Naive thymus-derived CD4-positive, alpha-beta T cell (primary cell): ENCODE measurements at regions of chr3 and their contacts with region 1.

Region 1: DNA sequence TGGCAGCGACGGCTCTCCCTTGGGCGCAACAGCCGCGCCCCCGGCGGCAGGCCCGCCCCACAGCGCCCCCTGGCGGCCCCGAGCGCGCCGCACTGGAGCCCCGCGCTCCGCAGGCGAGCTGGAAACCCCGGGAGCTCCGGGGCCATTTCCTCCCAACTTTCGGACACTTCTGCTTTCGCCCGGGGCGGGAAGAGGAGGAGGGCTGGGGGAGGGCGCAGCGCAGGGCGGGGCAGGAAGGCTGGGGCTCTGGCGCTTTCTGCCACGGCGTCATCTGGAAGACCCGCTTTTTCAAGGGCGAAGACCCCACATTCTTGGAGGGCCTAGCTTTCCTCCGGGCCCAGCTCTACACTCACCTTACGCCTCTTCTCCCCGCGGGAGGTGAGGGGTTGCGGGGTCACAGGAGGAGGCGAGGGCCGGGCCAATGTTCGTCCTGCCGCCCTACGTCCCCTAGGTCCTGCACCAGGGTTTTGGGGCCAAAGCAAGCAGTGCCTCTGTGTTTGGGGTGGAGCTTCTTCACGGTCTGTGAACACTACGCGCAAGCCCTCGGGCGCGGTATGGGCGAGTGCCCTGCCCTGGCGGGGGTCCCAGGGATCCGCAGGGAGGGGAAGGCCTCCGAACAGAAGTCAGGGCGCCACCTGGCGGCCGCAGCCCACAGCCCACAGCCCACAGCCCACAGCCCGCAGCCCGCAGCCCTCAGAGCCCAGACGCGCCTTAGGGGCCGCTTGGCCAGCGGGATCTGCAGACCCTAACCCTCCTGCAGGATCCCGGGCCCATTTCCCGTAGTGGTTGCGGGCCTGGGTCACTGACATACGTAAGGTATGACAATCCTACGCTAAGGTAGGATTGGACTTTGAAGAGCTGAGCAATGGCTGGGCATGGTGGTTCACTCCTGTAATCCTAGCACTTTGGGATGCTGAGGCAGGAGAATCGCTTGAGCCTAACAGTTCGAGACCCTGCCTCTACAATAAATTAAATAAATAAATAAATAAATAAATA is 31.1 kb downstream of the FOXL2 start:
- DNase-seq: peak; percentile 66 to 91 (median 80)
- ATAC-seq: peak; percentile 90
- H3K4me3 ChIP-seq: peak overlapping the region; percentile 88
- H3K4me3 Mint-ChIP-seq: peak overlapping the region; percentile 54 to 88 (median 86)
- H3K27ac ChIP-seq: peak overlapping the region; percentile 62
- H3K27ac Mint-ChIP-seq: peak overlapping the region in 6 of 9 donors; percentile 21 to 77 (median 62)
- H3K4me1 ChIP-seq: no peaks in the 10 kb centered on the region
- H3K4me1 Mint-ChIP-seq: peaks cover 5 to 9% (median 6%) of the 10 kb centered on the region in 7 donors
- H3K27me3 ChIP-seq: no peaks in the 10 kb centered on the region
- H3K27me3 Mint-ChIP-seq: peaks cover 0 to 37% (median 0%) of the 10 kb centered on the region in 5 donors

Region 2: DNA sequence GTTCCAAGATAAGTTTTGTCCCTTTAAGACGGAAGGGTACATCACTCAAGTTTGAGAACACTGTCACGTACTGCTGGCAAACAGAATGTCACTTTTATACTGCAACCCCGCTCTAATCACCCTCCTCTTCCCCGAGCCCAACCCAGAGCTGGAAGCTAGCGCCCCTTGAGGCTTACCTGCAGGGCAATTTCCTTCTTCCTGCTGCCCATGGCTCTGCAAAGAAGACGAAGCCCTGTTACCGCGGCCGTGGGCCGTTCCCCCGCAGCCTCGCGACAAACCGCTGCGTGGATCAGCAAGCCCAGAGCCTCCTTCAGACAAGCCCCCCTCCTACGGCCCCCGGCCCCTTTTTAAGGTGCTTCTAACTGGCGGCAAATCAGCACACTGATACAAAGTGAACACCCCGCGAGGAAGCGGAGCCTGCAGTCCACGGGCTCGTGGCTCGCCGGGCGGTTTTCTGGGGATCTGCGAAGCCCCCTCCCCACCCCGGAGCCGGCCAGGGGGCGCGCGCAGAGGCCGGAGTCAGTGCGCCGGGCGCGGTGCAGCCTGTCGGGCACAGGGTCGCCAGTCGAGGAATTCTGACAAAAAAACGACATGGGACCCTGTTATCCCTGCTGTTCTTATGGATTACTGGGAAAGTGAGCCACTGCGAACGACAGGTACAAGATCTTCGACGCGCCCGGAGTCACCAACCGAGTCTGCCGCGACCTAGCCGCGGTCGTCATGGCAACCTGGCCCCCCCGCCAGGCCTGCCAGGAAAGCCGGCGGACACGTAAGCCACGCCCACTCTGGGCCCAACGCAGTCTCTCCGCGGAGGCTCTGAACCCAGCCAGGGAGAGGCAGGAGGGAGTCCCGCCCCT is 586.4 kb before region 1 on chr3 and contains the start of gene NME9:
- CTCF ChIA-PET with region 1: no interaction called
- POLR2A ChIA-PET with region 1: no interaction called
- intact Hi-C with region 1: loop called (anchors 2 to 5 kb)
- DNase-seq: peak; percentile 79 to 91 (median 86)
- ATAC-seq: peak; percentile 95
- H3K4me3 ChIP-seq: peak within 1 kb of the TSS; percentile 78
- H3K4me3 Mint-ChIP-seq: peak within 1 kb of the TSS; percentile 91 to 99 (median 97)
- H3K27ac ChIP-seq: peak within 1 kb of the TSS; percentile 86
- H3K27ac Mint-ChIP-seq: peak within 1 kb of the TSS; percentile 85 to 98 (median 94)
- H3K4me1 ChIP-seq: peaks cover 5 to 8% of the 10 kb centered on the region in 2 donors
- H3K4me1 Mint-ChIP-seq: peaks cover 12 to 40% (median 36%) of the 10 kb centered on the region in 7 donors
- H3K27me3 ChIP-seq: no peaks in the 10 kb centered on the region
- H3K27me3 Mint-ChIP-seq: peaks cover 0 to 10% (median 0%) of the 10 kb centered on the region in 5 donors
- total RNA-seq, gene NME9: 0.69 to 2.0 (median 1.2) TPM in 4 of 5 experiments, not detected in the other

Region 3: GRCh38 chr3:138673641-138674530 is 241.9 kb before region 1 on chr3:
- CTCF ChIA-PET with region 1: no interaction called
- POLR2A ChIA-PET with region 1: no interaction called
- intact Hi-C with region 1: no loop called
- DNase-seq: no peak
- ATAC-seq: no peak
- H3K4me3 ChIP-seq: no peak overlapping the region
- H3K4me3 Mint-ChIP-seq: no peak overlapping the region
- H3K27ac ChIP-seq: no peak overlapping the region
- H3K27ac Mint-ChIP-seq: no peak overlapping the region
- H3K4me1 ChIP-seq: no peaks in the 10 kb centered on the region
- H3K4me1 Mint-ChIP-seq: peaks cover 0 to 3% (median 0%) of the 10 kb centered on the region in 7 donors
- H3K27me3 ChIP-seq: no peaks in the 10 kb centered on the region
- H3K27me3 Mint-ChIP-seq: no peaks in the 10 kb centered on the region

Region 4: GRCh38 chr3:138686771-138687221 is 229.0 kb before region 1 on chr3:
- CTCF ChIA-PET with region 1: interaction called, 28 read pairs
- POLR2A ChIA-PET with region 1: no interaction called
- intact Hi-C with region 1: no loop called
- DNase-seq: no peak
- ATAC-seq: peak; percentile 63
- H3K4me3 ChIP-seq: no peak overlapping the region
- H3K4me3 Mint-ChIP-seq: no peak overlapping the region
- H3K27ac ChIP-seq: no peak overlapping the region
- H3K27ac Mint-ChIP-seq: no peak overlapping the region
- H3K4me1 ChIP-seq: no peaks in the 10 kb centered on the region
- H3K4me1 Mint-ChIP-seq: peaks cover 0 to 7% (median 0%) of the 10 kb centered on the region in 7 donors
- H3K27me3 ChIP-seq: no peaks in the 10 kb centered on the region
- H3K27me3 Mint-ChIP-seq: no peaks in the 10 kb centered on the region

Region 5: GRCh38 chr3:138781012-138781470 is 134.8 kb before region 1 on chr3:
- CTCF ChIA-PET with region 1: interaction called, 8 read pairs
- POLR2A ChIA-PET with region 1: no interaction called
- intact Hi-C with region 1: loop called (anchors 2 to 10 kb)
- DNase-seq: peak in 7 of 9 donors; percentile 43 to 78 (median 66)
- ATAC-seq: peak; percentile 96
- H3K4me3 ChIP-seq: peak overlapping the region; percentile 16
- H3K4me3 Mint-ChIP-seq: peak overlapping the region; percentile 3 to 84 (median 72)
- H3K27ac ChIP-seq: peak overlapping the region; percentile 57
- H3K27ac Mint-ChIP-seq: peak overlapping the region; percentile 84 to 96 (median 87)
- H3K4me1 ChIP-seq: peaks cover 10 to 15% of the 10 kb centered on the region in 2 donors
- H3K4me1 Mint-ChIP-seq: peaks cover 19 to 56% (median 48%) of the 10 kb centered on the region in 7 donors
- H3K27me3 ChIP-seq: no peaks in the 10 kb centered on the region
- H3K27me3 Mint-ChIP-seq: no peaks in the 10 kb centered on the region

Region 6: DNA sequence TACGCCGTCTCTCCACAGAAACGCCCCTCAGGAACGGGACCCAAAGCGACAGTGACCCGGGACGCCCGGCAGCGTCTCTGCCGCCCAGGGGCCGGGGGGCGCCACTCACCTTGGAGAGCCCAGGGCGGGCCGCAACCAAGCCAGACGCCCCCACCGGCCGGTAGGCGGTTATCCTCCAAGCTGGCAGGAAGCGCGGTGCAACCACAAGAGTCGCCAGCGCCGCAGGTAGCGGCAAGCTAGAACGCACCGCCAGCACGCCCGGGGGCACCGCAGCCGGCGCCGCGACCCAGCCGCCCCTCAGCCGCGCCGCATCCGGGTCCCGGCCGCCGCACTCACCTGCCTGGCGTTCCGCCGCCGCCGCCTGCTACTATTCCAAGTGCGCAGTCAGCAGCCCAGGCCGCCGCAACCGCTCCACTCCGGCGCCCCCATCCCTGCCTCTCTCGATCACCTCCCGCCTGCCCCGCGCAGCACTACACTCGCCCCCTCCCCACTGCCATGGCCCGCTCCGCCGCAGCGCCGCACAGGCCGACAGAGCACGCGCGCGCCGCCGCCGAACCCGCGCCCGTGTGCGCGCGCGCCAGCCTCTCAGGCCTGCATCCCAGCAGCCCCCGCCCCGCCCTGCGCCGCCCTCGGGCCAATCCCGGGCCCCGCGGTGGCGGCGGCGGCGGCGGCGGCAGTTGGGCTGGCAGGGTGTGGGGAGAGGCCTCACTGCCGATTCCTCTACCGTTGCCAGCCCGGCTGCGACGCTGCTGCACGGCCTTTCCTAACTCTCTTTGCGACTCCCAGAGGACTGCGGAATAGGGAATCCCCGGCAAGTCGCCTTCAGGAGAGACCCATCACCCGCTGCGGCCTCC is 81.2 kb before region 1 on chr3 and contains the start of gene PIK3CB:
- CTCF ChIA-PET with region 1: interaction called, 4 read pairs
- POLR2A ChIA-PET with region 1: interaction called, 5 read pairs
- intact Hi-C with region 1: loop called (anchors 1 kb)
- DNase-seq: peak; percentile 80 to 92 (median 90)
- ATAC-seq: peak; percentile 93
- H3K4me3 ChIP-seq: peak within 1 kb of the TSS; percentile 90
- H3K4me3 Mint-ChIP-seq: peak within 1 kb of the TSS; percentile 84 to 100 (median 96)
- H3K27ac ChIP-seq: peak within 1 kb of the TSS; percentile 80
- H3K27ac Mint-ChIP-seq: peak within 1 kb of the TSS; percentile 90 to 100 (median 99)
- H3K4me1 ChIP-seq: peaks cover 16 to 21% of the 10 kb centered on the region in 2 donors
- H3K4me1 Mint-ChIP-seq: peaks cover 19 to 36% (median 26%) of the 10 kb centered on the region in 7 donors
- H3K27me3 ChIP-seq: no peaks in the 10 kb centered on the region
- H3K27me3 Mint-ChIP-seq: no peaks in the 10 kb centered on the region
- total RNA-seq, gene PIK3CB: 22.2 to 46.9 (median 38.3) TPM